ENCODE measurements at regions of chr17 and their contacts with region 1.

Region 1: DNA sequence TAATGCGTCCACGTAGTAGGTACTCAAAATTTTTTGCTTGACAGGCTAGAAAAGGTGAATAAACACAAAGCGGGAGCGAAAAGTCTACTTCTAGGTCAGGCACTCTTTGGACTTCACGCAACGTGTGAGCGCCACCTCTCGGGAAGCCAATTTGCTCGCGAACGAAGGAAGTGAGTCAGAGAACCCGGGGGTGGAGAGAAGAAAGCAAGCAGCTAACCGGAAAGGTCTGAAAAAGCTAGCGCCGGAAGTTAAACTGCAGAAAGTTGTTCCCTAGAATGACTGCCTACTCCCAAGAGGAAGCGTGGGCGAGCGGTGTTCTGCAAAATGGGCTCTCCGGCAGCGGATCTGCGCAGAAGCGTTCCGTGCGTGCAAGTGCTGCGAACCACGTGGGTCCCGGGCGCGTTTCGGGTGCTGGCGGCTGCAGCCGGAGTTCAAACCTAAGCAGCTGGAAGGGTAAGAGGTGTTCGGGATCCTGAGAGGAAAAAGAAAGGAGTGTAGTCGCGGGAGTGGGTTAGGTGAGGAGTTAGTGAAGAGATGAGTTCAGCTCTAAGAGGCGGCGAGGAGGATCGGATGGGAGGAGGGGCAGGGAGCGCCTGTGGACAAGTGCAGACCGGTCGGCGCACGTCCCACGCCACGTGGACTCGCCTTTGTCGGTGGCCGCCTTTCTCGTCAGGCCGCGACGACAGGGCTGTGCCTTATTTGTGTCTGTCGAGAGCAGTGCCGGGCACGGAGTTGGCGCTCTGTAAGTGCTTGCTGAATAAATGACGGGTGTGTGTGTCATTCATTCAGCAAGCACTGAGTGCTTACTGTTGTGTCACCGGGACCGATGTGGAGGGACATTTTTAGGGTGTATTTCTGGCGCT is at the start of gene NME1:
- DNase-seq: peak; percentile 99
- H3K4me3 ChIP-seq: peak within 1 kb of the TSS; percentile 56 to 87 (median 85)
- H3K27ac ChIP-seq: peak within 1 kb of the TSS; percentile 70
- H3K4me1 ChIP-seq: peaks cover 14% of the 10 kb centered on the region
- H3K27me3 ChIP-seq: no peaks in the 10 kb centered on the region
- CTCF ChIP-seq: peak; percentile 82 to 96
- POLR2A ChIP-seq: peak; percentile 74
- total RNA-seq, gene NME1: 214 and 215 TPM in 2 replicates

Region 2: GRCh38 chr17:50697663-50698274 is 455.7 kb before region 1 on chr17:
- CTCF ChIA-PET with region 1: no interaction called
- POLR2A ChIA-PET with region 1: no interaction called
- dilution Hi-C with region 1: no loop called
- intact Hi-C with region 1: no loop called
- DNase-seq: no peak
- H3K4me3 ChIP-seq: no peak overlapping the region
- H3K27ac ChIP-seq: no peak overlapping the region
- H3K4me1 ChIP-seq: no peaks in the 10 kb centered on the region
- H3K27me3 ChIP-seq: no peaks in the 10 kb centered on the region
- CTCF ChIP-seq: no peak
- POLR2A ChIP-seq: no peak

Region 3: DNA sequence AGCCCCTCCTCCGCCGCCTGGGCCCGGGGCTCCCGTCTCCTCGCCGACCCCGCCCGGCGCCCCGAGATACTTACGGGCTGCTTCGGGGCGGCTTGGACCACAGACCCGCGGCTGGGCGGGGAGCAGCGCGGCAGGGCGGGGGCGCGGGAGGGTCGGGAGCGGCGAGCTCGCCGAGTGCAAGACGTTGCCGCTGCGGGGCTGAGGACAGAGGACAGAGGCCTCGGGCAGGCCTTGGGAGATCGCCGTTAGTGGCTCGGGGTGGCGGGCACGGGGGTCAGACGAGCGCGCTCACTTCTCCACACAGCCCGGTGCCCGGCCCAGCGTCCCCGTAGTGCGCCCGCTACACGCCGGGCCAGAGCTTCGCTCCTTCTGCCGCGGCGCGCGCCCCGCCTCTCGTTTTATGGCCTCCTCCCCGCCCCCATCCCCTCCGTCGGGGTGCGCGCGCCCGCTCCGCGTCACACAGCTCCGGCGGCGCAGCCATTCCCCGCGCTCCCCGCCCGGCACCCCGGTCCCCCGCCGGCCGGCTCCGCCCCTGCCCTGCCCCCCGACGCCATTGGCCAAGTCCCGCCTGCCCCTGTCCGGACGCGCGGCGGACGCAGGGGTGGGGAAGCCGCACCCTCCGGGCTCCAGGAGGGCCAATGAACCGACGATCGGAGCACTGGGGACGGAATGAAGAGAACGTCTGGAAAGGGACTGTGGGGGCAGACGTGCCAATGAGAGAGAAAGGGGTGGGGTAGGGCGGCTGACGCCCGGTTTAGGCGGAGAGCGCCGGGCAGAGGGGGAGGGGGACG is 287.3 kb before region 1 on chr17 and contains the start of gene TOB1:
- CTCF ChIA-PET with region 1: interaction called, 5 read pairs
- POLR2A ChIA-PET with region 1: interaction called, 8 read pairs
- dilution Hi-C with region 1: no loop called
- intact Hi-C with region 1: loop called (anchors 1 kb)
- DNase-seq: peak; percentile 98
- H3K4me3 ChIP-seq: peak within 1 kb of the TSS; percentile 48 to 82 (median 63)
- H3K27ac ChIP-seq: peak within 1 kb of the TSS; percentile 38
- H3K4me1 ChIP-seq: peaks cover 11% of the 10 kb centered on the region
- H3K27me3 ChIP-seq: no peaks in the 10 kb centered on the region
- CTCF ChIP-seq: no peak
- POLR2A ChIP-seq: peak; percentile 99
- total RNA-seq, gene TOB1: 12.9 and 13.0 TPM in 2 replicates

Region 4: GRCh38 chr17:51000835-51001638 is 152.4 kb before region 1 on chr17:
- CTCF ChIA-PET with region 1: interaction called, 140 read pairs
- POLR2A ChIA-PET with region 1: interaction called, 3 read pairs
- dilution Hi-C with region 1: no loop called
- intact Hi-C with region 1: loop called (anchors 1 kb)
- DNase-seq: peak; percentile 78
- H3K4me3 ChIP-seq: no peak overlapping the region
- H3K27ac ChIP-seq: no peak overlapping the region
- H3K4me1 ChIP-seq: peaks cover 3% of the 10 kb centered on the region
- H3K27me3 ChIP-seq: no peaks in the 10 kb centered on the region
- CTCF ChIP-seq: peak; percentile 18 to 42
- POLR2A ChIP-seq: no peak

Region 5: DNA sequence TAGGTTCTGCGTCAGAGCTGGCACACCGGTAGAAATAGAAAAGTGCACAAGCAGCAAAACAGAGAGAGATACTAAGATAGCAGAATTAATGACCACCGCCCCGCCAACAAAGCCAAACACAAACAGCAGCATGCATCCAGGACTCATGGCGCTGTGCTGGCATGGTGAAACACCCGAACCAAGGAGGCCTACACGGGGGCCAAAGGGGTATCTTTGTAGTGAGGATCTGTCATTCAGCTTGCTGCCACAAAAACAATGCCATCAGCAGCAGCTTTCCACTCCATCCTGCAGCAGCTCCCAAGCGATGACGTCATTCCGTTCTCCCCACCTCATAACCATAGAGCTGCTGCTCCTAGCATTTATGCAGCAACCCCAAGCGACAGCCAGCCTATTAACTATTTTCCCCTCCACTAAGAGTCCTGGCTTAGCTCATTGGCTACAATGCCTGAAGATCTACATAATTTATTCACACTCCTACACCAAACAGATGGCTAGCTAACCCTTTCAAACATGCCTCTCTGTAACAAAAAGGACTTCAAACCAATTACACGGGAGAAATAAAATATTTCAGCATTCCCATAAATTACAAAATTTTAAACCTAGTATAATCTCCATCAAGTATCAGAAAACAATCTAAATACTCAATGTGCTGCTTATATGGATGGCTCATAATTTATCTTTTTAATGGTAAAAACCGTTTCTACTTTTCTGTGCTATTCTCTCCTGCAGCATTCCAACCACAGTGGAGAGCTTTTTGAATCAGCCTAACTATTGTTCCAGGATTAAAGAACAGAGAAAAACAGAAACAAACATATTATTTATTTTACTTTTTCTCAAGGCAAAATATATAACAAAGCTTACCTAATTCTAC is 106.7 kb before region 1 on chr17:
- CTCF ChIA-PET with region 1: interaction called, 12 read pairs
- POLR2A ChIA-PET with region 1: no interaction called
- dilution Hi-C with region 1: no loop called
- intact Hi-C with region 1: no loop called
- DNase-seq: peak; percentile 72
- H3K4me3 ChIP-seq: no peak overlapping the region
- H3K27ac ChIP-seq: no peak overlapping the region
- H3K4me1 ChIP-seq: no peaks in the 10 kb centered on the region
- H3K27me3 ChIP-seq: no peaks in the 10 kb centered on the region
- CTCF ChIP-seq: no peak
- POLR2A ChIP-seq: no peak

Region 6: DNA sequence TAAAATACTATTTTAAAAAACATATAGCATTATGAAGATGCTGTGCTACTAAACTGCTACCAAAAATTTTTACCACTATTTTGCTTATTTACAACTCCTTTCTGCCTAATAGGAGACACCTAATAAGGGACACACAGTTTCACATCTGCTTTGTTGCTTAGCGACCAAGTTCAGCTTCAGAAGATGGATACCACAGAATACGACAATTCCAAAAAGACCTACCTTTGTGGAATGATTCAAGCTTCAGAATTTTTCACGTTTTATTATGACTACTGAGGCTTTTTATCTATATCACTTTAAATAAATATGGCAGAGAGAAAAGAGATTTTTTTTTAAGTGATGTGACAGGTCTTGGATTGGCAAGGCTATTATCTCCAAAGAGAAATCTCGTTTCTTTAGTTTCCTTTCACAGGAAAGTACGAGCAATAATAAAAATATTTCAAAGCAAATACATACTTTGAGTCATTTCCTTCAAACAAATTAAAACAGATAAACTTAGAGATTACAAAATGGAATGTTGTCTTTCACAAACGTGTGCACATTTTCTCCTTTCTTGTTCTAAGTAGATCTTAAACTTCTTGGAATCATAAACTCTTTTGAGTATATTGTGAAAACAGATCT is 68.1 kb before region 1 on chr17:
- CTCF ChIA-PET with region 1: interaction called, 4 read pairs
- POLR2A ChIA-PET with region 1: no interaction called
- dilution Hi-C with region 1: no loop called
- intact Hi-C with region 1: loop called (anchors 1 kb)
- DNase-seq: peak; percentile 79
- H3K4me3 ChIP-seq: peak overlapping the region in 1 of 3 experiments; percentile 32
- H3K27ac ChIP-seq: peak overlapping the region; percentile 48
- H3K4me1 ChIP-seq: peaks cover 21% of the 10 kb centered on the region
- H3K27me3 ChIP-seq: no peaks in the 10 kb centered on the region
- CTCF ChIP-seq: no peak
- POLR2A ChIP-seq: no peak

Region 7: GRCh38 chr17:51132964-51133319 is 20.5 kb before region 1 on chr17:
- CTCF ChIA-PET with region 1: interaction called, 12 read pairs
- POLR2A ChIA-PET with region 1: no interaction called
- dilution Hi-C with region 1: no loop called
- intact Hi-C with region 1: loop called (anchors 1 kb)
- DNase-seq: peak; percentile 94
- H3K4me3 ChIP-seq: no peak overlapping the region
- H3K27ac ChIP-seq: peak overlapping the region; percentile 82
- H3K4me1 ChIP-seq: peaks cover 23% of the 10 kb centered on the region
- H3K27me3 ChIP-seq: no peaks in the 10 kb centered on the region
- CTCF ChIP-seq: no peak
- POLR2A ChIP-seq: no peak

Region 8: GRCh38 chr17:51189628-51190027 is 36.2 kb after region 1 on chr17:
- CTCF ChIA-PET with region 1: no interaction called
- POLR2A ChIA-PET with region 1: no interaction called
- dilution Hi-C with region 1: no loop called
- intact Hi-C with region 1: no loop called
- DNase-seq: no peak
- H3K4me3 ChIP-seq: no peak overlapping the region
- H3K27ac ChIP-seq: no peak overlapping the region
- H3K4me1 ChIP-seq: peaks cover 2% of the 10 kb centered on the region
- H3K27me3 ChIP-seq: no peaks in the 10 kb centered on the region
- CTCF ChIP-seq: no peak
- POLR2A ChIP-seq: no peak

Region 9: DNA sequence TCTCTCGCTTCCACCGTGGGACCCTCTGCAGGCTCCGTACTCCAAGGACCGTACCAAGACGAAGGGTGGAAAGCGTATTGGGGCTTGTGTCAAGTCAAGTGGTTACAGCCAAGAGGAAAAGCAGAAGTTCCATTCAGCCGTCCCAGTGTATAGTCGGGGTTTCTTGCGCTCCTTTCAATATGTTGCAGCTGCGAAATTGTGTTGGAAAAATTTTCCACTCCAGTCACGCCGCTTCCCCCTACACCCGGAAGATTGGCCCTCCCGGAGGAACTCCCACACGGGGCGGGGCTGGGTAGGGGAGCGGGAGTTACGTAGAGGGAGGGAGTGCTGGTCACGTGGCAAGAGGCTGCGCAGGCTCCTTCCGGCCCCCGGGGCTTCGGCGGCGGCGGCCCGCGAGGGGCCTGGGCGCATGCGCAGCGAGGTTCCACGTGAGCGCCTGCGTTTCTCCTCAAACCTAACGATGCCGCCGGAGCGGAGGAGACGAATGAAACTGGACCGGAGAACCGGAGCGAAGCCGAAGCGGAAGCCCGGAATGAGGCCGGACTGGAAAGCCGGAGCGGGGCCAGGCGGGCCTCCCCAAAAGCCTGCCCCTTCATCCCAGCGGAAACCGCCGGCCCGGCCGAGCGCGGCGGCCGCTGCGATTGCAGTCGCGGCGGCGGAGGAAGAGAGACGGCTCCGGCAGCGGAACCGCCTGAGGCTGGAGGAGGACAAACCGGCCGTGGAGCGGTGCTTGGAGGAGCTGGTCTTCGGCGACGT is 106.9 kb after region 1 on chr17 and contains the start of gene UTP18:
- CTCF ChIA-PET with region 1: no interaction called
- POLR2A ChIA-PET with region 1: no interaction called
- dilution Hi-C with region 1: no loop called
- intact Hi-C with region 1: loop called (anchors 1 kb)
- DNase-seq: peak; percentile 97
- H3K4me3 ChIP-seq: peak within 1 kb of the TSS; percentile 70 to 99 (median 88)
- H3K27ac ChIP-seq: peak within 1 kb of the TSS; percentile 99
- H3K4me1 ChIP-seq: peaks cover 19% of the 10 kb centered on the region
- H3K27me3 ChIP-seq: no peaks in the 10 kb centered on the region
- CTCF ChIP-seq: no peak
- POLR2A ChIP-seq: no peak
- total RNA-seq, gene UTP18: 29.3 and 32.2 TPM in 2 replicates

Region 10: DNA sequence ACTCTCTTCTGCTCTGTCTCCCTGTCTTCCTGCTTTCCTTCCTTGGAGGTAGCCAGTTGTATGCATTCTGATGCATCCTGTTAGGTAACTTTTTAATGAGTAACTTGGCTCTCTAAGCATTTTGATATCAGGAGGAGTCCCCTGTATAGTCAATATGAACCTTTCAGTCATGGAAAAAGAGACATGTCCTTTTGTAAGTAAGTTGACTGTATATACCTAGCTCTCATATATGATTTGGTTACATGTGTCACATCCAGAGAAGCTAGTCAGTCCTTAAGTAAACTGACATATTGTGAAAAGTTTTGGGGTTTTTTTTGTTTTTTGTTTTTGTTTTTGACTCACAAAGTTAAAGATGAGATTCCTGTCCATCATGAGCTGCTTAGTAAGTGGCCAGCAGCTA is 125.7 kb after region 1 on chr17:
- CTCF ChIA-PET with region 1: no interaction called
- POLR2A ChIA-PET with region 1: no interaction called
- dilution Hi-C with region 1: no loop called
- intact Hi-C with region 1: no loop called
- DNase-seq: no peak
- H3K4me3 ChIP-seq: no peak overlapping the region
- H3K27ac ChIP-seq: no peak overlapping the region
- H3K4me1 ChIP-seq: no peaks in the 10 kb centered on the region
- H3K27me3 ChIP-seq: no peaks in the 10 kb centered on the region
- CTCF ChIP-seq: no peak
- POLR2A ChIP-seq: no peak

Measured in endothelial cell of umbilical vein (primary cell).